ENCODE measurements at regions of chr17 and their contacts with region 1.

Region 1: GRCh38 chr17:31015639-31016038 is 44.8 kb downstream of the RNF135 start:
- DNase-seq: no peak
- H3K4me3 ChIP-seq: no peak overlapping the region
- H3K27ac ChIP-seq: no peak overlapping the region
- H3K4me1 ChIP-seq: no peaks in the 10 kb centered on the region
- H3K27me3 ChIP-seq: no peaks in the 10 kb centered on the region
- CTCF ChIP-seq: no peak
- POLR2A ChIP-seq: no peak

Region 2: DNA sequence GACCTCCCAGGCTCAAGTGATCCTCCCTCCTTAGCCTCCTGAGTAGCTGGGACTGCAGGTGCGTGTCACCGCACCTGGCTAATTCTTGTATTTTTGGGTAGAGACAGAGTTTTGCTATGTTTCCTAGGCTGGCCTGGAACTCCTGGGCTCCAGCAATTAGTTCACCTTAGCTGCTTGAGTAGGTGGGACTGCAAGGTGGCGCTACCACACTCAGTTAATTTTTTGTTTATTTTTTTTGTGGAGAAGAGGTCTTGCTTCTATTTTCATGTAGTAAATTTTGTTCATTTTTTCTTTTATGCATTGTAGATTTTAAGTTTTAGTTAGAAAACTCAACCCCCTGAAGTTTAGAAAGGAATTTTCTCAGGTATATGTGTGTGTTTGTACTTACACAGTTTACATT is 23.1 kb before region 1 on chr17:
- intact Hi-C with region 1: no loop called
- DNase-seq: no peak
- H3K4me3 ChIP-seq: no peak overlapping the region
- H3K27ac ChIP-seq: no peak overlapping the region
- H3K4me1 ChIP-seq: no peaks in the 10 kb centered on the region
- H3K27me3 ChIP-seq: no peaks in the 10 kb centered on the region
- CTCF ChIP-seq: no peak
- POLR2A ChIP-seq: no peak

Region 3: DNA sequence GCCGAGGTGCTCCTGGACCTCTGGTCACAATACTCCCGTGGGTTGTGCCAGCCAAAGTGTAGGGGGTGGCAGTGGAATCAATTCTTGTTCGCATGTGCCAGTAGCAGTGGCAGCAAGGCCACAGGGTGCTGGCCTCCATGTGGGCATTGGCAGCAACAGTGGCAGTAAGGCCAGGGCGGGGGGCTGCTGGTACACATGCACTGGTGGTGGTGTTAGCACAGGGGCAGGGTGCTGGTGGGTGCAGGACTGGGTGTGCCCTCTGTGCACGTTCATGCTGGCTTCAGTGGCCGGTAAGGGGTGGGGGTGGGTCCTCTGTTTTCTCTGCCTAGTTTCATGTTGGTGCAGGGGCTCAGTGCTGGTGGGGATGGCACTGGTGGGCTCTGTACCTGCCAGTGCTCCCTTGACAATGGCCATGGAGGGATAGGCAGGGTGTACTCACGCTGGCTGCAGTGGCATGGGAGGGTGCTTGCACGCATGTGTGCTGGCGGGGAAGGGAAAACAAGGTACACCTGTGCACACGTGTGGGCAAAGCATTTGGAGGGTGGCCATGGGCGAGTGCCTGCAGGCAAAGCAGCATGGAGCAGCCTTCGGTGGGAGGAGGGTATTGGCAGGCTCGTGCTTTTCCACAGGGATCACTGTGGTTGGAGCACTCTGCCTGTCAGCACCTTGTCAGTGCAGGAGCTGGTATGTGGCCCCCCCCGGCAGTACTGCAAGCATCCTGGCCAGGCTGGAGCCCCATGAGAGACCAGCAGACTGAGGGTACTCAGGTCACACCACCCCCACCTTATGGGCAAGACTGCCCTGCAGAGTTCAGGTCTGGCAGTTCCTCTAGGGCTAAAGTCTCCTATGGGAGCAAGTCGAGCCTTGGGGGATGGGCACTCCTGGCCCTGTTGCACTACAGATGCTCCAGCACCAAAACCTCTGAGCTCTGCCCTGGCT is 114.9 kb after region 1 on chr17:
- intact Hi-C with region 1: no loop called
- DNase-seq: no peak
- H3K4me3 ChIP-seq: no peak overlapping the region
- H3K27ac ChIP-seq: no peak overlapping the region
- H3K4me1 ChIP-seq: no peaks in the 10 kb centered on the region
- H3K27me3 ChIP-seq: no peaks in the 10 kb centered on the region
- CTCF ChIP-seq: no peak
- POLR2A ChIP-seq: no peak

Region 4: GRCh38 chr17:31487648-31488263 is 472.1 kb after region 1 on chr17:
- intact Hi-C with region 1: loop called (anchors 10 kb)
- DNase-seq: peak; percentile 90 to 96
- H3K4me3 ChIP-seq: peak overlapping the region; percentile 38 to 83 (median 69)
- H3K27ac ChIP-seq: peak overlapping the region; percentile 86 to 90
- H3K4me1 ChIP-seq: no peaks in the 10 kb centered on the region
- H3K27me3 ChIP-seq: no peaks in the 10 kb centered on the region
- CTCF ChIP-seq: no peak
- POLR2A ChIP-seq: peak; percentile 59

Measured in breast epithelium (tissue), 4 donors.